ENCODE measurements at regions of chr9 and their contacts with region 1.

Region 1: DNA sequence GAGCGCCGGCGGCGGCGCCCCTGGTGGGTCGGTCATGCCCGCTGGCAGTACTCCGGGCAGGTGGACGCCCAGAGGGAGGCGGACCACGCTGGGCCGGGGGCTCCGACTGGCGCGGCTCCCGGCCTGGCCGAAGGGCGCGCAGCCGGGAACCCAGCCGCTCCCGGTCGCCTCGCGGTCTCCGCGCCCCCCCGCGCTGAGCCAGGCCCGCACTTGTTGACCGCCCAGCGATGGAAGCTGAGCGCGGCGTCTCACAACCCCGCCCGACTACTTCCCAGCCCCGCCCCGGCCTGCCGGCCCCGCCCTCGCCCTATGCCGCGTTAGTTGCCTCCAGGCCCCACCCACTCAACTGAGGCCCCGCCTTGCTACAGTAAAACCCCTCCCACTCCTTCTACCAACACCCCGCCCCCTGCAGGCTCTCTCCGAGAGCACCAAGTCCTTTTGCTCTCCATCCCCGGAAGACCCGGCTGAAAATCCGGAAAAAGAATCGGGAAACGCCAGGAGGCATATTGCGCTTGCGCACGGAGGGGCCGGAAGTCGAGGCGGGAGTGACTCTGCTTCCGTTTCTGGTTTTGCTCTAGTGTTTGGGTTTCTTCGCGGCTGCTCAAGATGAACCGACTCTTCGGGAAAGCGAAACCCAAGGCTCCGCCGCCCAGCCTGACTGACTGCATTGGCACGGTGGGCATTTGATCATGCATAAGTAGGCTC is at the starts of genes BAG1 and CHMP5:
- DNase-seq: peak; percentile 99
- H3K4me3 ChIP-seq: peak within 1 kb of the TSS; percentile 100
- H3K4me3 Mint-ChIP-seq: peak within 1 kb of the TSS; percentile 87
- H3K27ac Mint-ChIP-seq: peak within 1 kb of the TSS; percentile 87
- H3K4me1 ChIP-seq: no peaks in the 10 kb centered on the region
- H3K4me1 Mint-ChIP-seq: peaks cover 16% of the 10 kb centered on the region
- H3K27me3 ChIP-seq: no peaks in the 10 kb centered on the region
- H3K27me3 Mint-ChIP-seq: no peaks in the 10 kb centered on the region
- CTCF ChIP-seq: peak in 1 of 2 experiments; percentile 25
- total RNA-seq, gene BAG1: 51.2 and 62.1 TPM in 2 replicates
- total RNA-seq, gene CHMP5: 52.5 and 58.3 TPM in 2 replicates

Region 2: DNA sequence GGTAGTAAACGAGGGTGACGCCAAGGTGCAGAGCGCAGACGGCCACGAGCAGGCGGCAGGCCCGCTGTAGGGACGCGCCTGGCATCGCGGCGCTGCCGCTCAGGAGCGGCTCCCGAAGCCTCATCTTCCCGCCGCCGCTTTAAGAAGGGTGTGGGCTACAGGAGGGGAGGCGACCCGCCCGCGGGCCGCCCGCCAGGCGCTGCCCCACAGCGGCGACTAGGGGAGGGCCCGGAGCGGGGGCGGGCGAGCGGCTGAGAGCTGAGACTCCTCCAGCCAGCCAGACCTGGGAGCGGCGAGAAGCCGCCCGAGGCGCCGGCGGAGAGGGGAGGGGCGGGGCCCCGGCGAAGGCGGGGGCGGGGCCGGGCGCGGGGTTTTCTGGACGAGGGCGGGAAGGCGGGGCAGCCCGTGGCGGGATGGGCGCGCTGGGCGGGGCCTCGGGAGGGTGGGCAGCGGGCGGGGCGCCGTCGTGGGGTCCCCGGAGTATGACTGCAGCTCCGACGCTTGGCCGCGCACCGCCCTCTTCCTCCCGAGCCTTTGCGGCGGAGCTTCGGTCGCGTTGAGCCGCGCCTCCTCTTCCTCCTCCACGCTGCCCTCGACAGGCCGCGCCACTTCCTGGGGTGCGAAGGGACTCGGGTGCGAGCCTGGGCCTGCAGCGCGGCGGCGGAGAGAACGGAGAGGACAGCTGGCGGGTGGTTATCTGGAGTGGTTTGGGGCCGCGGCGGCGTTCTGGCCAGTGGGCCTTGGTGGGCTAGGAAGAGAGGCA is 97.4 kb before region 1 on chr9 and contains the start of gene B4GALT1:
- CTCF ChIA-PET with region 1: no interaction called
- POLR2A ChIA-PET with region 1: no interaction called
- intact Hi-C with region 1: no loop called
- DNase-seq: peak; percentile 95 to 97
- H3K4me3 ChIP-seq: peak within 1 kb of the TSS; percentile 91
- H3K4me3 Mint-ChIP-seq: peak within 1 kb of the TSS; percentile 89
- H3K27ac Mint-ChIP-seq: peak within 1 kb of the TSS; percentile 98
- H3K4me1 ChIP-seq: peaks cover 64% of the 10 kb centered on the region
- H3K4me1 Mint-ChIP-seq: peaks cover 66% of the 10 kb centered on the region
- H3K27me3 ChIP-seq: no peaks in the 10 kb centered on the region
- H3K27me3 Mint-ChIP-seq: no peaks in the 10 kb centered on the region
- CTCF ChIP-seq: peak in 1 of 2 experiments; percentile 13
- total RNA-seq, gene B4GALT1: 104 and 121 TPM in 2 replicates

Region 3: GRCh38 chr9:33277484-33277883 is 12.9 kb after region 1 on chr9:
- CTCF ChIA-PET with region 1: no interaction called
- POLR2A ChIA-PET with region 1: no interaction called
- intact Hi-C with region 1: no loop called
- DNase-seq: no peak
- H3K4me3 ChIP-seq: no peak overlapping the region
- H3K4me3 Mint-ChIP-seq: no peak overlapping the region
- H3K27ac Mint-ChIP-seq: no peak overlapping the region
- H3K4me1 ChIP-seq: no peaks in the 10 kb centered on the region
- H3K4me1 Mint-ChIP-seq: no peaks in the 10 kb centered on the region
- H3K27me3 ChIP-seq: no peaks in the 10 kb centered on the region
- H3K27me3 Mint-ChIP-seq: no peaks in the 10 kb centered on the region
- CTCF ChIP-seq: no peak

Region 4: GRCh38 chr9:33290247-33291030 is 25.8 kb after region 1 on chr9 and contains the start of gene NFX1:
- CTCF ChIA-PET with region 1: no interaction called
- POLR2A ChIA-PET with region 1: interaction called, 9 read pairs
- intact Hi-C with region 1: loop called (anchors 1 kb)
- DNase-seq: peak; percentile 96 to 97
- H3K4me3 ChIP-seq: peak within 1 kb of the TSS; percentile 84
- H3K4me3 Mint-ChIP-seq: peak within 1 kb of the TSS; percentile 96
- H3K27ac Mint-ChIP-seq: peak within 1 kb of the TSS; percentile 99
- H3K4me1 ChIP-seq: peaks cover 17% of the 10 kb centered on the region; the same call in 1 of the 2 replicates
- H3K4me1 Mint-ChIP-seq: peaks cover 12% of the 10 kb centered on the region
- H3K27me3 ChIP-seq: no peaks in the 10 kb centered on the region
- H3K27me3 Mint-ChIP-seq: no peaks in the 10 kb centered on the region
- CTCF ChIP-seq: no peak
- total RNA-seq, gene NFX1: 32.6 TPM in 2 replicates

Region 5: GRCh38 chr9:33320568-33321261 is 56.1 kb after region 1 on chr9:
- CTCF ChIA-PET with region 1: no interaction called
- POLR2A ChIA-PET with region 1: no interaction called
- intact Hi-C with region 1: loop called (anchors 10 kb)
- DNase-seq: no peak
- H3K4me3 ChIP-seq: no peak overlapping the region
- H3K4me3 Mint-ChIP-seq: no peak overlapping the region
- H3K27ac Mint-ChIP-seq: no peak overlapping the region
- H3K4me1 ChIP-seq: no peaks in the 10 kb centered on the region
- H3K4me1 Mint-ChIP-seq: no peaks in the 10 kb centered on the region
- H3K27me3 ChIP-seq: no peaks in the 10 kb centered on the region
- H3K27me3 Mint-ChIP-seq: no peaks in the 10 kb centered on the region
- CTCF ChIP-seq: no peak